ENCODE measurements at regions of chr16 and their contacts with region 1.

Region 1: DNA sequence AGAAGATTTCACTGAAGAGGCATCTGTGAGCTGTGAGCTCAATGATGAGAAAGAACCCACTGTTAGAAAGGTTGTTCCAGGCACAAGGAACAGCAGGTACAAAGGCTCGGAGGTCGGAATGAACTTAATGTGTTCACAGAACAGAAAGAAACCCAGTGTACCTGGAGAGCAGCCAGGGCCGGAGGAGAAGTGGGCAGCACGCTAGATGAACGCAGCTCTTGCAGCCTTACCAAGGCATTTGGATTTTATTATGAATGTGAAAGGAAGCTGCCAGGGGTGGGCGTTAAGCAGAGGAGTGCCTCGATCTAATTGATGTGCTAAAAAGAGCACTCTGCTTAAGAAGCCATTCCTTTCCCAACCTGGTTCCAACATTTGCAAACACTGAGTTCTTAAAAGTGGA is 19.0 kb downstream of the EEF2K start:
- DNase-seq: peak in 1 of 2 donors; percentile 32
- ATAC-seq: peak in 1 of 4 donors; percentile 11
- H3K4me3 ChIP-seq: no peak overlapping the region
- H3K27ac ChIP-seq: peak overlapping the region; percentile 69
- H3K4me1 ChIP-seq: peaks cover 27% of the 10 kb centered on the region
- H3K27me3 ChIP-seq: no peaks in the 10 kb centered on the region
- CTCF ChIP-seq: no peak

Region 2: DNA sequence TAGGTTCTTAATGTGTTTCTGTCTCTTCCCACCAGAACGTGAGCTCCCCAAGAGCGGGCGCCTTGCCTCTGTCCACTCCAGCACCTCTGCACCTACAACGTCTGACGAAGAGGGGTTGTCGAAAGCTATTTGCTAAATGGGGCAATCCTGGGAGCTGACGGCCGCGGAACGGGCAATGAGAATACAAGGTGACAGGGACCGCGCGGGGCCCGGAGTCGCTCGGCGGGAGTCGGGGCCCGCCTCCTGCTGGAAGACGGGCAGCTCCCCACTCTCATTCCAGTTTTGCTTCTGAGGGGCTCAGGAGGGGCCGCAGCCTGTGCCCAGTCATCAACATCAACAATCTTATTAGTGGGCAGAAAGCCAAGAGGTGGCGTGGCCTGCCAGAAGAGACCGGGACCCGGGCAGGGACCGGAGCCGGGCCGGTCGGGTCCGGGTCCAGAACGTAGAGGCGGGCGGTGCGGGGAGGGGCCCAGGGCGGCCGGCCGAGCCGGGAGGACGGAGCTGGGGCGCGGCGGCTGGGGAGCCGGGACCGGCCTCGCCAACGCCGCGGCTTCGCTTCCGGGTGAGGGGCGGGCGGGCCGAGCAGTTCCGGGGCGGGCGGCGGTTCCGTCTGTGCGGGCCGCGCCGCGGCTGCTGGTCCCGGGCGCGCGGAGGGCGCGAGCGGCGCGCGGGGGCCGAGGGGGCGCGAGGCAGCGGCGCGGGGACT is 217.4 kb before region 1 on chr16 and contains the start of gene MOSMO:
- intact Hi-C with region 1: no loop called
- DNase-seq: peak; percentile 82 to 86
- ATAC-seq: peak; percentile 89 to 94 (median 92)
- H3K4me3 ChIP-seq: peak within 1 kb of the TSS; percentile 99
- H3K27ac ChIP-seq: peak within 1 kb of the TSS; percentile 95
- H3K4me1 ChIP-seq: peaks cover 35% of the 10 kb centered on the region
- H3K27me3 ChIP-seq: no peaks in the 10 kb centered on the region
- CTCF ChIP-seq: no peak
- total RNA-seq, gene MOSMO: 7.8 to 13.8 (median 10.5) TPM

Region 3: GRCh38 chr16:22262460-22262859 is 37.4 kb after region 1 on chr16:
- intact Hi-C with region 1: loop called (anchors 5 kb)
- DNase-seq: no peak
- ATAC-seq: no peak
- H3K4me3 ChIP-seq: no peak overlapping the region
- H3K27ac ChIP-seq: no peak overlapping the region
- H3K4me1 ChIP-seq: no peaks in the 10 kb centered on the region
- H3K27me3 ChIP-seq: no peaks in the 10 kb centered on the region
- CTCF ChIP-seq: no peak

Measured in psoas muscle (tissue), 8 donors.